Activated T-helper 1 cell treated with anti-CD3 and anti-CD28 coated beads, Interleukin-12 subunit alpha, Interleukin-12 subunit beta, Interleukin-2, Interleukin-4 antibody, amounts not matched to agents 30 ng/mL and 10 ng/mL and 1 ng/mL, durations not matched to agents 14 hours and 24 hours and 36 hours (primary cell): ENCODE measurements at regions of chr2 and their contacts with region 1.

Region 1: GRCh38 chr2:112821142-112821541 is 15.4 kb downstream of the IL1B start:
- DNase-seq: peak; percentile 38
- H3K4me3 Mint-ChIP-seq: peak overlapping the region; percentile 32
- H3K27ac Mint-ChIP-seq: peak overlapping the region; percentile 79
- H3K4me1 Mint-ChIP-seq: peaks cover 39% of the 10 kb centered on the region
- H3K27me3 Mint-ChIP-seq: peaks cover 3% of the 10 kb centered on the region

Region 2: DNA sequence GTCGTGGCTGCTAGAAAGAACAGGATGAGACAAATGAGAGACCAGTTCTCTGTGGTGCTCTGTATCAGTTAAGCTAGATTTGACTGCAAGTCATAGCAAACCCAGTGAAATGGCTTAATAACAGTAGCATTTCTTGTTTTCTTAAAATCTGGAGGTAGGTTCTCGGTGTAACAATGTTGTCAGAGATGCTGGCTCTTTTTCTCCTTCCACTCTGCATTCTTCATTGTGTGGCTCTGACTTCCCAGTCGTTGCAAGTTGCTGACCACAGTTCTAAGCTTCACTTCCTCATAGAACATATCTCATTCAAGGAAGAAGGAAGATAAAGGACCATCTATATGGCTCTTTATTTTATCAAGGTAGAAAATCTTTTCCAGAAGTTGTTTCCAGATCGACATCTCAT is 48.8 kb before region 1 on chr2:
- intact Hi-C with region 1: loop called (anchors 1 kb)
- DNase-seq: no peak
- H3K4me3 Mint-ChIP-seq: no peak overlapping the region
- H3K27ac Mint-ChIP-seq: no peak overlapping the region
- H3K4me1 Mint-ChIP-seq: peaks cover 32% of the 10 kb centered on the region
- H3K27me3 Mint-ChIP-seq: peaks cover 6% of the 10 kb centered on the region

Region 3: GRCh38 chr2:112803691-112804521 is 17.2 kb before region 1 on chr2:
- intact Hi-C with region 1: loop called (anchors 1 kb)
- DNase-seq: no peak
- H3K4me3 Mint-ChIP-seq: no peak overlapping the region
- H3K27ac Mint-ChIP-seq: peak overlapping the region; percentile 93
- H3K4me1 Mint-ChIP-seq: peaks cover 36% of the 10 kb centered on the region
- H3K27me3 Mint-ChIP-seq: peaks cover 2% of the 10 kb centered on the region

Region 4: GRCh38 chr2:112879491-112880041 is 58.4 kb after region 1 on chr2:
- intact Hi-C with region 1: no loop called
- DNase-seq: no peak
- H3K4me3 Mint-ChIP-seq: no peak overlapping the region
- H3K27ac Mint-ChIP-seq: no peak overlapping the region
- H3K4me1 Mint-ChIP-seq: peaks cover 23% of the 10 kb centered on the region
- H3K27me3 Mint-ChIP-seq: peaks cover 6% of the 10 kb centered on the region

Region 5: GRCh38 chr2:113175042-113175628 is 354.0 kb after region 1 on chr2:
- intact Hi-C with region 1: no loop called
- DNase-seq: peak; percentile 76
- H3K4me3 Mint-ChIP-seq: peak overlapping the region; percentile 89
- H3K27ac Mint-ChIP-seq: peak overlapping the region; percentile 93
- H3K4me1 Mint-ChIP-seq: peaks cover 74% of the 10 kb centered on the region
- H3K27me3 Mint-ChIP-seq: peaks cover 3% of the 10 kb centered on the region